Endothelial cell of umbilical vein (primary cell): ENCODE measurements at regions of chr10 and their contacts with region 1.

Region 1: DNA sequence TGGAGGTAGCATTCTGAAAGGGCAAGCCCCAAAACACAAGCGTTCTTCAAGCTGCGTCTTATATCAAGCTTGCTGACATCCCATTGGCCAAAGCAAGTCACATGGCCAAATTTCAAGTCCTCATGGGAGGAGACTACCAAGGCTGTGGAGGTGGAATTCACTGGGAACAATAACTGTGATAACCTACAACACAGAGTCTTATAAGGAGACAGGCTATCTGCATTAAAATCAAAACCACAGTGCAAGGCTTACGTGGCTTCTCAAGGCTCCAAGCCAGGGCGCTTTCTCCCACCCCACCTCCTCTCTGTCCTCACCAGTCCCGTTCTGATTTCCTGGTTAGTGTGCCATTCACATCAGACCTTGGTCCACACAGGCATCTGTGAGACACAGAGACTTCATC is 39.4 kb downstream of the ADRB1 start:
- DNase-seq: no peak
- H3K4me3 ChIP-seq: no peak overlapping the region
- H3K27ac ChIP-seq: no peak overlapping the region
- H3K4me1 ChIP-seq: no peaks in the 10 kb centered on the region
- H3K27me3 ChIP-seq: no peaks in the 10 kb centered on the region
- CTCF ChIP-seq: no peak
- POLR2A ChIP-seq: no peak

Region 2: GRCh38 chr10:114068054-114068707 is 14.9 kb before region 1 on chr10:
- CTCF ChIA-PET with region 1: interaction called, 10 read pairs
- POLR2A ChIA-PET with region 1: no interaction called
- dilution Hi-C with region 1: no loop called
- intact Hi-C with region 1: no loop called
- DNase-seq: no peak
- H3K4me3 ChIP-seq: no peak overlapping the region
- H3K27ac ChIP-seq: no peak overlapping the region
- H3K4me1 ChIP-seq: no peaks in the 10 kb centered on the region
- H3K27me3 ChIP-seq: peaks cover 0 to 2% of the 10 kb centered on the region in 2 experiments
- CTCF ChIP-seq: no peak
- POLR2A ChIP-seq: no peak